Aorta (tissue), 5 donors: ENCODE measurements at regions of chr6 and their contacts with region 1.

Region 1: DNA sequence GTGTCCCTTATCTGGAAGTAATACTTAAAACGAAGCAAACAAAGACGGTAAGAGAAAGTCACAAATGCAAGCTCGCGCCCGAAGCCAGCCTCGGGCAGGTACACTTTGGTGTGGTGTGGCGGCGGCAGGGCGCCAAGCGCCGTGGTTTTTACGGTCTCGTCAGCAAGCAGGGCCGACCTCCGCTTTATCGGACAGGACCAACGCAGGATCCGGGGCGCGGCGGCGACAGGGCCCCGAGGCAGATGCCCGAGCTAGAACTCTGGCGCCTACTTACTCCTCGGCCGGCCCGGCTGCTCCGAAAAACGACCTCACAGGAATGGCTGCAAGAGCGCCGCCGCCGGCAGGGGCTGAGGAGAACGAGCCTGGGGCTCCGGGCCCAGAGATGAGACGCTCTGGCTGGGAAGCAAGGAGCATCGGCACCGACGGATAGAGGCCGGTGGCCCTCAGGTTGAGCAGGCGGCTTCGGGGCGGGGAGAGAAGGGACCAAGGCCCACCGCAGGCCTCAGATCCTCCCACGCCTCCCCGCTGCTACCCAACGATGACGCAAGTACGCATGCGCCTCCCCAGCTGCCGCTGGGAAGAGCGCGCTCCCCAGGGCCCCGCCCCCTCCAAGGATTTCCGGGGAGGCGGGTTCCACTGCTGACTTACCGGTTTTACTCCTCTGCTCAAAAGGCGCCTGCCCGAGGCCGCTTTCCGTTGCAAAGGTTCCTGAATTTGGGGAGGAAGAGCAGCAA is 60.6 kb downstream of the FAM217A start:
- DNase-seq: peak; percentile 98
- ATAC-seq: peak; percentile 95
- H3K4me3 ChIP-seq: peak overlapping the region; percentile 45 to 76
- H3K27ac ChIP-seq: peak overlapping the region; percentile 30 to 97
- H3K4me1 ChIP-seq: peaks cover 0 to 2% of the 10 kb centered on the region in 2 donors
- H3K27me3 ChIP-seq: no peaks in the 10 kb centered on the region

Region 2: GRCh38 chr6:3403238-3404173 is 614.8 kb before region 1 on chr6:
- intact Hi-C with region 1: loop called in 1 of 2 experiments (anchors 10 kb)
- DNase-seq: no peak
- ATAC-seq: no peak
- H3K4me3 ChIP-seq: no peak overlapping the region
- H3K27ac ChIP-seq: no peak overlapping the region
- H3K4me1 ChIP-seq: no peaks in the 10 kb centered on the region
- H3K27me3 ChIP-seq: no peaks in the 10 kb centered on the region